Mammary epithelial cell (primary cell): ENCODE measurements at regions of chr6 and their contacts with region 1.

Region 1: DNA sequence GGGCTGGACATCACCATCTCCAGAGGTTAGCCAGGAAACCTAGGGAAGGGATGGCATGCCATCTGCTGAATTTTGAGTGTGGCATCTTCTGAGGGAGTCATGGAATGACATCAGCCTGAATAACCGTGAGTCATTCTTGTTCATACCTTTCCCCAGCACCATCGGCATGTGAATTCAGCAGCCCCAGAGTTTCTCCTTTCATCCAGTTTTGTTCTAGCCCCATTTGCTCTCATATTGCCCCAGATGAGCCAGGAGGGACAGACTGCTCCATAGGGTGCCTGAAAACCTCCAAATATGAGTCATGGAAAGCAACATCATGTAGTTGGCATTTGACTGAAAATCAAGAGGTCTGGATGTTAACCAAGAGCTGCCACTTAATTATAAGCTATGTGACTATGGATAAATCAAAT is 219.2 kb upstream of the SGK1 start:
- DNase-seq: peak; percentile 100
- H3K4me3 ChIP-seq: no peak overlapping the region
- H3K27ac ChIP-seq: peak overlapping the region; percentile 83
- H3K4me1 ChIP-seq: peaks cover 57% of the 10 kb centered on the region
- H3K27me3 ChIP-seq: no peaks in the 10 kb centered on the region
- CTCF ChIP-seq: no peak

Region 2: GRCh38 chr6:134288538-134289203 is 248.5 kb before region 1 on chr6:
- CTCF ChIA-PET with region 1: no interaction called
- dilution Hi-C with region 1: no loop called
- in situ Hi-C with region 1: no loop called
- intact Hi-C with region 1: loop called (anchors 10 kb)
- DNase-seq: peak; percentile 97
- H3K4me3 ChIP-seq: peak overlapping the region in 1 of 3 experiments; percentile 4
- H3K27ac ChIP-seq: peak overlapping the region; percentile 100
- H3K4me1 ChIP-seq: peaks cover 19% of the 10 kb centered on the region
- H3K27me3 ChIP-seq: no peaks in the 10 kb centered on the region
- CTCF ChIP-seq: no peak

Region 3: DNA sequence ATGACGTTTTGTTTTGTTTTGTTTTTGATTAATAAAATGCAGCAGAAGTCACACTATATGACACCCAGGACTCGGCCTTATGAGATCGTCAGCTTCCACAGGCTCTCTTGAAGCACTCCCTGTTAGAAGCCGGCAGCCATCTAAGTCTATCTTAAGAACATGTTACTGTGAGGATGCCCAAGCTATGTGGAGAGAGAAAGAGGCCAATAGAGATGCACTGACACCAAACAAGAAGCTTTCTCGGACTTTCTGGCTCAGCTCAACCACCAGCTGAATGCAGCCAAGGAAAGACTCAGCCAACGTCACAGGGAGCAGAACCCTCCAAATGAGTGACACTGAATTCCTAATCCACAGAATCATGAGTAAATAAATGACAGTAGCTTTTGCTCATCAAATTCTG is 233.2 kb before region 1 on chr6:
- CTCF ChIA-PET with region 1: no interaction called
- dilution Hi-C with region 1: no loop called
- in situ Hi-C with region 1: no loop called
- intact Hi-C with region 1: loop called (anchors 5 kb)
- DNase-seq: no peak
- H3K4me3 ChIP-seq: no peak overlapping the region
- H3K27ac ChIP-seq: no peak overlapping the region
- H3K4me1 ChIP-seq: no peaks in the 10 kb centered on the region
- H3K27me3 ChIP-seq: no peaks in the 10 kb centered on the region
- CTCF ChIP-seq: no peak

Region 4: DNA sequence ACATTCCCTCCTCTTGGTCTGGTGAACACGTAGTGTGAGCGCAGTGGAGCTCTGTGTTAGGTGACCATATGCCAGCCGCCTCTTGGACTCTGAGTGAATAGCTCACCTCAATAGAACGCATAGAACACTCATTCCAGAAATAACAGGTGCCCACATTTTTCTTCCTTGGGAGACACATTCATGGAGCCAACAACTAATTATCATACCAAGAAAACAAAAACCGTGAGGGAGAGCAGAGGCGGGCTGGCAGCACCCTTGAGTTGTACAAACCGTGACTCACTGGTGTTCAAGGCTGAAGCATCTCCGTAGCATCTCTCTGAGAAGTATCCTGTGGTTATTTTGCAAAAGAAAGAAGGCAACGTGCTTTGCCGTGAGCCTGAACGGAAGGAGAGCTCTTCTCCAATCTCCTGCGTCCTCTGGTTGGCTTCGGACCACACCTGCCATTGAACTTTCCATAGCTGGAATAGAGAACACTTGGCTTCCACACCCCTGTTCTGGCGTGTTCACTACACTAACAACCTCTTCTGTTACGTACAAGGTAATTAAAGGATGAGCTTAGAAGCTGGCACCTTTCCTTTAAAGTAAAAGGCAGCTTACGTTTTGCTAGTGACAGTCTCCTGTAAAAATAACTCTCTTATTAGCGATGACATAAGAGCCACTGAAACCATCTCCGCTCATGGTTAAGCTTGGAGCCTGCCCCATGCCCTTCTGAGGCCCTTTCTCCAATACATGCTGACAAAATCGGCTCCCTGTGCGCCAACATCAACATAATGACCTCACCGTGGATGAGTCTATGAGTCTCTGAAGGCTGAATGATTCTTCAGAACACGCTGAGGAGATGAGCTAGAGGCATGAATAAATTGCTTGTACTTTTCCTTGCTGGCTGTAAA is 189.0 kb before region 1 on chr6:
- CTCF ChIA-PET with region 1: no interaction called
- dilution Hi-C with region 1: no loop called
- in situ Hi-C with region 1: no loop called
- intact Hi-C with region 1: loop called (anchors 10 kb)
- DNase-seq: peak; percentile 56
- H3K4me3 ChIP-seq: no peak overlapping the region
- H3K27ac ChIP-seq: no peak overlapping the region
- H3K4me1 ChIP-seq: no peaks in the 10 kb centered on the region
- H3K27me3 ChIP-seq: no peaks in the 10 kb centered on the region
- CTCF ChIP-seq: no peak

Region 5: DNA sequence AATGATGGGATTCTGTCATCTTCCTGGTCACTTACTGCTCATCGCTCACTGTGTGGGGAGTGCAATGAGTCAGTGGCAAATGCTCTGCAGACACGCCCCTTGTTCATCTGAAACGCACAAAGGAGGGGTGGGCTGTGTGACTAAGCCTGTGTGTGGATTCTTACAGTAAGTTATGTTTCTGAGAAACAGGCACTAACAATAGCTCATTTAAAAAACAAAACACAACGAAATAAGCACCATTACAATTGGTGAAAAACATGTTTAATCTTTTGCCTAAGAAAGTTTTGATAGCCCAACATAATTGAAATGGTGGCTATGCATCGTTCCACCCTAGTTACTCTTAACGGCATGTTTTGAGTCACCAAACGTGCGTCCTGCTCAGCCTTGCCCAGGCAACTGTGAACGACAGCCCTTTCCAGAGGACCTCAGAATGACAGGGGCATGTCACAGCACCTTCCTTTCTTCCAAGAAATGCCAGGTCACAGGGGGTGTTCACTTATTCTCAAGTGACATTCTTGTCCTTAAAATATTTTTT is 100.8 kb before region 1 on chr6:
- CTCF ChIA-PET with region 1: no interaction called
- dilution Hi-C with region 1: no loop called
- in situ Hi-C with region 1: no loop called
- intact Hi-C with region 1: loop called (anchors 1 kb)
- DNase-seq: peak; percentile 97
- H3K4me3 ChIP-seq: peak overlapping the region in 1 of 3 experiments; percentile 8
- H3K27ac ChIP-seq: peak overlapping the region; percentile 98
- H3K4me1 ChIP-seq: peaks cover 33% of the 10 kb centered on the region
- H3K27me3 ChIP-seq: no peaks in the 10 kb centered on the region
- CTCF ChIP-seq: no peak

Region 6: DNA sequence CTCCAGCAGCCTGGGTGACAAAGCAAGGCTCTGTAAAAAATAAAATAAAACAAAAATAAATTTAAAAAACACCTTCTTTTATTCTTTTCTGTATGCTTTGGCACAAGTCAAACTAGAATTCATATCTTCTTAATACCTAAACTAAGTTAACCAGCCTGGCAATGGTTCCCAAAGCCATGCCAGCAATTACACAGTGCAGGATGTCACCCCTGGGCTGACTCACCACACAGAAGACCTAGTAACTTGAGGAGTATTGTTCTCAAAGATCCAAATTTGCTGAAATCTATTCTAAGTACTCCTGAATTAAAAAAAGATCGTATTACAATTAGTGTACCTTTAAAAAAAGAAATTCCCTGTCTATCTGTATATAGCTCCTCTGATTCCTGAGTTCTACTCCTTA is 56.6 kb before region 1 on chr6:
- CTCF ChIA-PET with region 1: no interaction called
- dilution Hi-C with region 1: no loop called
- in situ Hi-C with region 1: no loop called
- intact Hi-C with region 1: no loop called
- DNase-seq: peak; percentile 26
- H3K4me3 ChIP-seq: no peak overlapping the region
- H3K27ac ChIP-seq: no peak overlapping the region
- H3K4me1 ChIP-seq: peaks cover 14% of the 10 kb centered on the region
- H3K27me3 ChIP-seq: no peaks in the 10 kb centered on the region
- CTCF ChIP-seq: no peak

Region 7: GRCh38 chr6:134589512-134589911 is 52.4 kb after region 1 on chr6:
- CTCF ChIA-PET with region 1: no interaction called
- dilution Hi-C with region 1: no loop called
- in situ Hi-C with region 1: no loop called
- intact Hi-C with region 1: loop called (anchors 1 kb)
- DNase-seq: peak; percentile 96
- H3K4me3 ChIP-seq: no peak overlapping the region
- H3K27ac ChIP-seq: peak overlapping the region; percentile 84
- H3K4me1 ChIP-seq: peaks cover 24% of the 10 kb centered on the region
- H3K27me3 ChIP-seq: no peaks in the 10 kb centered on the region
- CTCF ChIP-seq: no peak